SK-N-SH (cell line): ENCODE measurements at regions of chr7 and their contacts with region 1.

Region 1: DNA sequence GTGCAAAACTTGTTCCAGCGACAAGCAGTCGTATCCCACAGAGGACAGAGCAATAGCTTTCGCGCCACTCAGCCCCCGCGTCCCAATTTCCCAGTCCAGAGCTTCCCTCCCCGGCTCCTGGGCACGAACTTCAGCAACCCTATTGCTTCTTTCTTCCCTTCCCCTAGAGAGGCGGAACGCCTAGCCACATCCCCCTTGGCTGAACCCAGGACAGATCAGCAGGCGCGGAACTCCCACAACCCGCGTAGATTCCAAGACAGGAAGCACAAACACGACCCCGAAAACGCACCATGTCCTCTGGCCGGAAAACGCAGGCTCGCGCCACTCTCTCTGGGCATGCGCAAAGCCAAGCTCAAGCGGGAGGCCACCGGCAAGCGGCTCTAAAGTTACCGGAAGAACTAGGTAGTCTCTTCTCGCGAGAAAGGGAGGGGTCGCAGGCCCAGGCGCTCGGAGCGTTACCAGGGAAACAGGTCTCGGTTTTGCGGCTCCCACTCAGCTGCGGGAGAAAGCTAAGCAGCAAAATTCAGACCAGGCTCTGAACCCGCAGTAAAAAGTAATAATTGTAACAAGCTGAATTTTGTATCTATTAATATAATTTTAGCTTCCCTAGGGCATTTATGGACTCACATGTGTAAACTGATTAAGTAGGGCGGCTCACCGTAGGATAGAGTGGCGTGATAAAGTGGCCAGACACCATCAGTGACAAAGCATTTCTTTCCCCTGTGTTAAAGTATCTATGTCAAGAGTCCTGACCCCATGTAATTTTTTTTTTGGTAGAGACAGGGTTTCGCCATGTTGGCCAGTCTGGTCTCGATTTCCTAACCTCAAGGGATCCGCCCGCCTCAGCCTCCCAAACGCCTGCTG is at the start of gene TMEM209:
- DNase-seq: peak; percentile 98
- H3K4me3 ChIP-seq: peak within 1 kb of the TSS; percentile 78 to 91
- H3K27ac ChIP-seq: peak within 1 kb of the TSS; percentile 91 to 99
- H3K4me1 ChIP-seq: peaks cover 0 to 8% of the 10 kb centered on the region in 2 experiments; a peak in 2 of 4 replicates
- H3K27me3 ChIP-seq: no peaks in the 10 kb centered on the region
- CTCF ChIP-seq: no peak
- EP300 ChIP-seq: no peak; a peak in 1 of 4 replicates
- RAD21 ChIP-seq: peak; percentile 26
- polyA plus RNA-seq, gene TMEM209: 14.9 and 18.2 TPM in 2 replicates

Region 2: DNA sequence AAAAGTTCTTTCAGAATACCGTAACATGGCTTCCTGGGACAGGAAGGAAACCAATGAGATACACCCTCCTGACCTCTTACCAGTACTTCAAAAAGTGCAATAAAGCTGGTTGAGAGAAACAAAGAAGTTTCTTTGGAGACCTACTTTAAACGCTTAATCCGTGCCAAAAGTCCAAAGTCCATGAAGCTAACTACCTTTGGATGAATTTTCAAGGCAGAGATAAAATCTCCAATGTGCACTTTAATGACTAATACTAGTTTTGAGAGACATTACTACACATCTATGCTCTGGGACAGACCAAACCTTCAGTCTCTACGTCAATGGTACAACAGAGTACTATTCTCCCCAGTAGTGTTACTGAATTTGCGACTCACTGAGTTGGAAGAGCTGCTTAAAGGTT is 298.6 kb before region 1 on chr7:
- CTCF ChIA-PET with region 1: no interaction called
- POLR2A ChIA-PET with region 1: no interaction called
- DNase-seq: no peak
- H3K4me3 ChIP-seq: no peak overlapping the region
- H3K27ac ChIP-seq: peak overlapping the region; percentile 24 to 82; a peak in 3 of 4 replicates
- H3K4me1 ChIP-seq: peaks cover 0 to 41% of the 10 kb centered on the region in 2 experiments; a peak in 2 of 4 replicates
- H3K27me3 ChIP-seq: no peaks in the 10 kb centered on the region
- CTCF ChIP-seq: no peak
- EP300 ChIP-seq: peak in 1 of 2 experiments; percentile 52; a peak in 1 of 4 replicates
- RAD21 ChIP-seq: no peak

Region 3: GRCh38 chr7:130154501-130155317 is 50.6 kb before region 1 on chr7:
- CTCF ChIA-PET with region 1: no interaction called
- POLR2A ChIA-PET with region 1: interaction called, 13 read pairs
- DNase-seq: peak; percentile 98
- H3K4me3 ChIP-seq: no peak overlapping the region; a peak in 1 of 4 replicates
- H3K27ac ChIP-seq: peak overlapping the region in 1 of 2 experiments; percentile 48; a peak in 2 of 4 replicates
- H3K4me1 ChIP-seq: peaks cover 0 to 16% of the 10 kb centered on the region in 2 experiments; a peak in 1 of 4 replicates
- H3K27me3 ChIP-seq: no peaks in the 10 kb centered on the region
- CTCF ChIP-seq: peak; percentile 45
- EP300 ChIP-seq: peak in 1 of 2 experiments; percentile 71; a peak in 2 of 4 replicates
- RAD21 ChIP-seq: no peak; the same call in 1 of the 2 replicates

Region 4: GRCh38 chr7:130393101-130393561 is 187.8 kb after region 1 on chr7:
- CTCF ChIA-PET with region 1: no interaction called
- POLR2A ChIA-PET with region 1: no interaction called
- DNase-seq: no peak
- H3K4me3 ChIP-seq: no peak overlapping the region
- H3K27ac ChIP-seq: no peak overlapping the region
- H3K4me1 ChIP-seq: peaks cover 0 to 18% of the 10 kb centered on the region in 2 experiments; a peak in 2 of 4 replicates
- H3K27me3 ChIP-seq: no peaks in the 10 kb centered on the region
- CTCF ChIP-seq: no peak
- EP300 ChIP-seq: no peak
- RAD21 ChIP-seq: no peak

Region 5: GRCh38 chr7:130440527-130441365 is 235.4 kb after region 1 on chr7 and contains the start of gene CEP41:
- CTCF ChIA-PET with region 1: interaction called, 3 read pairs
- POLR2A ChIA-PET with region 1: interaction called, 14 read pairs
- DNase-seq: peak; percentile 99
- H3K4me3 ChIP-seq: peak within 1 kb of the TSS; percentile 71 to 74
- H3K27ac ChIP-seq: peak within 1 kb of the TSS; percentile 71 to 95
- H3K4me1 ChIP-seq: peaks cover 0 to 14% of the 10 kb centered on the region in 2 experiments; a peak in 2 of 4 replicates
- H3K27me3 ChIP-seq: no peaks in the 10 kb centered on the region
- CTCF ChIP-seq: no peak
- EP300 ChIP-seq: peak in 1 of 2 experiments; percentile 6; a peak in 1 of 4 replicates
- RAD21 ChIP-seq: no peak
- polyA plus RNA-seq, gene CEP41: 20.9 and 25.8 TPM in 2 replicates

Region 6: GRCh38 chr7:130490888-130491804 is 285.8 kb after region 1 on chr7:
- CTCF ChIA-PET with region 1: no interaction called
- POLR2A ChIA-PET with region 1: no interaction called
- DNase-seq: peak; percentile 87
- H3K4me3 ChIP-seq: peak overlapping the region; percentile 53 to 58
- H3K27ac ChIP-seq: peak overlapping the region in 1 of 2 experiments; percentile 51; a peak in 2 of 4 replicates
- H3K4me1 ChIP-seq: peaks cover 5 to 17% of the 10 kb centered on the region in 2 experiments
- H3K27me3 ChIP-seq: no peaks in the 10 kb centered on the region
- CTCF ChIP-seq: peak; percentile 71
- EP300 ChIP-seq: no peak
- RAD21 ChIP-seq: peak; percentile 58